Activated T-helper 1 cell treated with anti-CD3 and anti-CD28 coated beads, Interleukin-12 subunit alpha, Interleukin-12 subunit beta, Interleukin-2, Interleukin-4 antibody, amounts not matched to agents 30 ng/mL and 10 ng/mL and 1 ng/mL, durations not matched to agents 14 hours and 24 hours and 36 hours (primary cell): ENCODE measurements at regions of chr12 and their contacts with region 1.

Region 1: DNA sequence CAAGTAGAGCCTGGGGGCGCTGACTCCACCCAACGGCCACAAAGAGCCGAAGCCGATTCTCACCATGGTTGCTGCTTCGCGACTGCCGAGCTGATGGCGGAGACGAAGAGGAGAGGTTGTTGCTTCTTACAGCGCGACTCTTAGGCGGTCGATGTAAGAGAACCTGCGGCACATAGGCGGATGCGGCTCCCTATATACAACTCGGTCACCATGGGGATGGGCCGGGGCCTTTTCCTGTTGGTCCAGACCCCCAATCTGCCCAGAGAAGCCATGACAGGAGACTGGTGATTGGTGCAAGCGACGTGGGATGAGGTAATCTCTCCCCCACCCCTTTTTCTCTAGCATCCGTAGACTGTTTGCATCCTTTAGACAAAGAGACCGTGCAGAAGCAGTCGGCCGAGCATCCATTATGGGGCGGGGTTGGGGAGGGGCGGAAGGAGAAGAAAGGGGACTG is at the start of gene TUBA1A:
- DNase-seq: peak; percentile 94
- H3K4me3 Mint-ChIP-seq: peak within 1 kb of the TSS; percentile 90
- H3K27ac Mint-ChIP-seq: peak within 1 kb of the TSS; percentile 95
- H3K4me1 Mint-ChIP-seq: peaks cover 15% of the 10 kb centered on the region
- H3K27me3 Mint-ChIP-seq: peaks cover 2% of the 10 kb centered on the region
- total RNA-seq, gene TUBA1A: 46.7 and 47.2 TPM in 2 replicates

Region 2: GRCh38 chr12:48681738-48682532 is 507.0 kb before region 1 on chr12 and contains the start of gene KANSL2:
- intact Hi-C with region 1: loop called (anchors 2 kb)
- DNase-seq: peak; percentile 97
- H3K4me3 Mint-ChIP-seq: peak within 1 kb of the TSS; percentile 99
- H3K27ac Mint-ChIP-seq: peak within 1 kb of the TSS; percentile 96
- H3K4me1 Mint-ChIP-seq: peaks cover 44% of the 10 kb centered on the region
- H3K27me3 Mint-ChIP-seq: no peaks in the 10 kb centered on the region
- total RNA-seq, gene KANSL2: 65.3 and 66.4 TPM in 2 replicates

Region 3: GRCh38 chr12:49069507-49070346 is 119.2 kb before region 1 on chr12 and contains the start of gene RHEBL1:
- intact Hi-C with region 1: loop called (anchors 1 kb)
- DNase-seq: peak; percentile 100
- H3K4me3 Mint-ChIP-seq: peak within 1 kb of the TSS; percentile 100
- H3K27ac Mint-ChIP-seq: peak within 1 kb of the TSS; percentile 97
- H3K4me1 Mint-ChIP-seq: peaks cover 26% of the 10 kb centered on the region
- H3K27me3 Mint-ChIP-seq: no peaks in the 10 kb centered on the region
- total RNA-seq, gene RHEBL1: 8.6 and 10.7 TPM in 2 replicates

Region 4: GRCh38 chr12:49161092-49161795 is 27.7 kb before region 1 on chr12:
- intact Hi-C with region 1: no loop called
- DNase-seq: no peak
- H3K4me3 Mint-ChIP-seq: no peak overlapping the region
- H3K27ac Mint-ChIP-seq: no peak overlapping the region
- H3K4me1 Mint-ChIP-seq: no peaks in the 10 kb centered on the region
- H3K27me3 Mint-ChIP-seq: no peaks in the 10 kb centered on the region

Region 5: GRCh38 chr12:49200919-49201594 is 12.1 kb after region 1 on chr12:
- intact Hi-C with region 1: loop called (anchors 1 kb)
- DNase-seq: no peak
- H3K4me3 Mint-ChIP-seq: no peak overlapping the region
- H3K27ac Mint-ChIP-seq: peak overlapping the region; percentile 9
- H3K4me1 Mint-ChIP-seq: peaks cover 13% of the 10 kb centered on the region
- H3K27me3 Mint-ChIP-seq: peaks cover 8% of the 10 kb centered on the region

Region 6: GRCh38 chr12:49253088-49253487 is 64.1 kb after region 1 on chr12:
- intact Hi-C with region 1: no loop called
- DNase-seq: no peak
- H3K4me3 Mint-ChIP-seq: no peak overlapping the region
- H3K27ac Mint-ChIP-seq: no peak overlapping the region
- H3K4me1 Mint-ChIP-seq: peaks cover 4% of the 10 kb centered on the region
- H3K27me3 Mint-ChIP-seq: peaks cover 7% of the 10 kb centered on the region

Region 7: GRCh38 chr12:49264738-49265515 is 76.0 kb after region 1 on chr12 and contains the start of gene TUBA1C:
- intact Hi-C with region 1: loop called (anchors 1 kb)
- DNase-seq: peak; percentile 92
- H3K4me3 Mint-ChIP-seq: peak within 1 kb of the TSS; percentile 99
- H3K27ac Mint-ChIP-seq: peak within 1 kb of the TSS; percentile 100
- H3K4me1 Mint-ChIP-seq: peaks cover 38% of the 10 kb centered on the region
- H3K27me3 Mint-ChIP-seq: no peaks in the 10 kb centered on the region
- total RNA-seq, gene TUBA1C: 261 and 270 TPM in 2 replicates

Region 8: DNA sequence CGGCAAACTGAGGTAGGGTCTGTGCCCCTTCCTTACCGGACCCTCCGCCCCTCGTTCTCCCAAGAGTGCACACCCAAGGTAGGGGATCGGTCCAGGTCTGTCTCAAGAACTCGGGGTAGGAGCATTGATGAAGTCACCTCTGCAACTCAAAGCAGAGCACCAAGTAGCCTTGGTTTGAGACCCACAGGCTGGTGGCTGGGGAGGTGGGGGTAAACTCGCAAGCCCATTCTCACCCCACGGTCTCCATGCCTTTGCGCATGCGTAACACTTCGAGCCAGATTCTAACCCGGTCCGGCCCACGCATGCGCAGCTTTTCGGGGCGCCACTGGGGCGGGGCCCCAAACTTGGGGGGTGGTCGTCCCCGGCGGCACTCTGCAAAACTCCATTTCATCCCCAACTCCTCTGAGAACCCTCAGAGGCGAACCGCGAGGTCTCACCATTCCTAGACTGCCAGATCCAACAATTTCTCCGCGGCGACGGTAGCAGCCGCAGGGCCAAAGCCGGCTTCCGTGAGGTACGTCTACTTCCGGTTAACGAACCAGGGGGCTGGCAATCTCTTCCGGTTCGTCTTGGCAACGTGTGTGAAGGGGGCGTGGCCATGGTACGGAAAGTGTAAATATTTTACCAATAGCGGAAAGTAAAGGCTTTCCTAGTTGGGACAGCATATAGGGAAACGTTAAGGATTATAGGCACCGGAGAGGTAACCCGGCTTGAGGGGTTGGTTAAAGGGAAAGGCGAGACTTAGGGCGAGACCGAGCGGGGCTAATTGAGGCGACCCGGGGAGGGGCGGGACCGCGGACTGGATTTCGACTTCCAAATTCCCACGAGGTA is 378.9 kb after region 1 on chr12 and contains the start of gene MCRS1:
- intact Hi-C with region 1: loop called (anchors 5 kb)
- DNase-seq: peak; percentile 85
- H3K4me3 Mint-ChIP-seq: peak within 1 kb of the TSS; percentile 95
- H3K27ac Mint-ChIP-seq: peak within 1 kb of the TSS; percentile 96
- H3K4me1 Mint-ChIP-seq: peaks cover 57% of the 10 kb centered on the region
- H3K27me3 Mint-ChIP-seq: no peaks in the 10 kb centered on the region
- total RNA-seq, gene MCRS1: 77.1 and 77.9 TPM in 2 replicates

Region 9: GRCh38 chr12:50167041-50167828 is 978.3 kb after region 1 on chr12 and contains the start of gene CERS5:
- intact Hi-C with region 1: loop called (anchors 2 kb)
- DNase-seq: peak; percentile 98
- H3K4me3 Mint-ChIP-seq: peak within 1 kb of the TSS; percentile 99
- H3K27ac Mint-ChIP-seq: peak within 1 kb of the TSS; percentile 95
- H3K4me1 Mint-ChIP-seq: peaks cover 38% of the 10 kb centered on the region
- H3K27me3 Mint-ChIP-seq: no peaks in the 10 kb centered on the region
- total RNA-seq, gene CERS5: 64.2 and 67.9 TPM in 2 replicates